Transverse colon (tissue), 4 donors: ENCODE measurements at regions of chr18 and their contacts with region 1.

Region 1: DNA sequence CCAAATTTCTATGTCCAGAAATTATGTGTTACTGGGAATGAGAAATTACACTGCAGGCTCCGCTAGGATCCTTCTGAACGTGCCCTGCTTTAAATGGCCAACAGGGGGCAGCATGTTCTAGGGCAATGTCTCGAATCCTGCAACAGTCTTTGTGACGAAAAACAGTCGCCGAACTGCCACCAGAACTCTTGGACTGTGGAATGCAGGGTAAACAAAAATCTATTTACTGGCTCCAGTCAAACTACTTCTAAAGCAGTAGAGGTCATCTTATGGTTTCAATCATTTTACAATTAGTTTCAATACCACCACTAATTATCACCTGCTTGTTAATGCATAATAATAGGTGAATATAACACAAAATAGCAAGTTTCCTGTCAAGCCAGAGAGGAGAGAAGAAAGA is 9.8 kb upstream of the ZNF397 start:
- DNase-seq: peak; percentile 87
- H3K4me3 ChIP-seq: no peak overlapping the region
- H3K27ac ChIP-seq: no peak overlapping the region
- H3K4me1 ChIP-seq: peaks cover 0 to 5% (median 2%) of the 10 kb centered on the region in 4 donors
- H3K27me3 ChIP-seq: no peaks in the 10 kb centered on the region
- CTCF ChIP-seq: peak; percentile 87 to 96 (median 91)
- EP300 ChIP-seq: no peak
- POLR2A ChIP-seq: no peak

Region 2: DNA sequence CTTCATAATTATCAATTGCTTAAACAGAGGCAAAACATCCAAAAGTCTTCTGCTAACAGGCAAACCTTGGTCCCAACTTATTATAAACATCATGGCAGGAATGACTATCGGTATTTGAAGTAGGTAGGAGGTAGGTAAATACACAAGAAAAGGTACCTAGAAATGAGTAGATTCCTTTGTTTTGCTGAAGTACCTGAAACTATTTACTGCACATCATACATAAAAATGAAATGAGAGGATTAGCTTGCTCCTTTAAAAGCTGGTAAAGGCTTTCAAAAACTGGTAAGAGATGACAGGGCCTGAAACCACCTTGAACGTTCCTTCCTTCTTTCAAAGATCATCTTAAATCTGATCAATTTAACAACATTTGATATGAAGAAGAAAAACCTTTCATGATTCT is 245.1 kb before region 1 on chr18:
- in situ Hi-C with region 1: no loop called
- intact Hi-C with region 1: loop called (anchors 10 kb)
- DNase-seq: no peak
- H3K4me3 ChIP-seq: no peak overlapping the region
- H3K27ac ChIP-seq: no peak overlapping the region
- H3K4me1 ChIP-seq: peaks cover 0 to 3% (median 0%) of the 10 kb centered on the region in 4 donors
- H3K27me3 ChIP-seq: no peaks in the 10 kb centered on the region
- CTCF ChIP-seq: no peak
- EP300 ChIP-seq: no peak
- POLR2A ChIP-seq: no peak

Region 3: DNA sequence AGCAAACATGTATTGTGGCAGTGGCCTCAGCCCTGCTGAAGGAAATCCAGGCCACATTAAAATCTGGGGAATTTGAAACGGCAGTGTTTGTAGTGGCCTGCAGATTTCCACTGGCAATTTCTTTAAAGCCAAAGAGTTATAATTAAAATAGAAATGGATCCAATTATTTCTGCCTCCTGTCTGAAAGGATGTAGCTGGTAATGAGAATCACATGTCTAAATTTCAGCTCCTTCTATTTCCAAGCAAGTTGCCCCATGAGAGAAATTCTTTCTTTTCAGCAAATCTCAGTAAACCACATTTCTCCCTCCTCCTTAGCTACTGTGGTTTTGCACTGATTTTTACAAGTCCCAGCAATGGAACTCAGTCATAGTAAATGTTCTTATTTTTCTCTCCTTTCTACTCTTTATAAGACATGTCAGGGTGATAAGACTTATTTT is 201.5 kb after region 1 on chr18:
- in situ Hi-C with region 1: no loop called
- intact Hi-C with region 1: no loop called
- DNase-seq: no peak
- H3K4me3 ChIP-seq: no peak overlapping the region
- H3K27ac ChIP-seq: no peak overlapping the region
- H3K4me1 ChIP-seq: peaks cover 0 to 2% (median 0%) of the 10 kb centered on the region in 4 donors
- H3K27me3 ChIP-seq: no peaks in the 10 kb centered on the region
- CTCF ChIP-seq: no peak
- EP300 ChIP-seq: no peak
- POLR2A ChIP-seq: no peak

Region 4: GRCh38 chr18:35756506-35757117 is 525.6 kb after region 1 on chr18:
- in situ Hi-C with region 1: no loop called
- intact Hi-C with region 1: no loop called
- DNase-seq: peak; percentile 35
- H3K4me3 ChIP-seq: no peak overlapping the region
- H3K27ac ChIP-seq: no peak overlapping the region
- H3K4me1 ChIP-seq: no peaks in the 10 kb centered on the region
- H3K27me3 ChIP-seq: peaks cover 15% of the 10 kb centered on the region
- CTCF ChIP-seq: peak; percentile 73 to 82 (median 76)
- EP300 ChIP-seq: no peak
- POLR2A ChIP-seq: no peak